Right lobe of liver (tissue), 6 donors: ENCODE measurements at regions of chr1 and their contacts with region 1.

Region 1: DNA sequence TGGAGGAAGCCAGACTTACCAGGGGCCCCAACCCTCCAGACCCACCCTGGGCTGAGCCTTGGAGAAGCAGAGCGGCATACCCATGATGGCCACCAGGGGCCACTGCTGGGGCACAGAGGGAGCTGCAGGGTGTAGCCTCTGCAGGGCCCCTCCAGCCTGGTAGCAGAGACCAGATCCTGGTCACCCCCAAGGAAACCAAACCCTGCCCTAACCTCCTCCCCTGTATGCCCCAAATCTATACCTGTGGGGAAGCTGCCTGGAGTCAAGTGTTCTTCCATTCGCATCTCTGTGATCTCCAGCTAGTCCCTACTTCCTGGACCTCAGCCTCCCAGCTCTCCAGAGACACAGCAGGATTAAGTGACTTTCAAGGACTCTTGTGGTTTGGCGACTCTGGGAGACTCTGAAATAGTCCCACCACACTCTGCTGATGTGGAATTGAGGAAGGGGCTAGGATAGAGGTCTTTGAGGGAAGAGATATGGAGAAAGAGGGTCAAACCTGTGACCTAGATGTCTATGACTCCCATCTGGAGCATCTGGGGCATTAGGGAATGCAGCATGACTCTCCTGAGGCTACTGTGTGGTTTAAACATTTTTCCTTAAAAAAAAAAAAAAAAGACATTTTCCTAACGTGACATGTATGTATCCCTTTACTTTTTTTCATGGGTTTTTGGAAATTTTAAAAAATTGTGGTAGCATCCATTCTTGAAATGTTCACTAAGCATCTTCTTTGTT is 119.2 kb upstream of the IPO9 start:
- DNase-seq: peak in 2 of 3 donors; percentile 67 to 72
- ATAC-seq: peak; percentile 76 to 88 (median 82)
- H3K4me3 ChIP-seq: no peak overlapping the region
- H3K27ac ChIP-seq: no peak overlapping the region
- H3K4me1 ChIP-seq: no peaks in the 10 kb centered on the region
- H3K27me3 ChIP-seq: no peaks in the 10 kb centered on the region
- CTCF ChIP-seq: peak; percentile 70 to 94 (median 90)
- POLR2A ChIP-seq: no peak

Region 2: DNA sequence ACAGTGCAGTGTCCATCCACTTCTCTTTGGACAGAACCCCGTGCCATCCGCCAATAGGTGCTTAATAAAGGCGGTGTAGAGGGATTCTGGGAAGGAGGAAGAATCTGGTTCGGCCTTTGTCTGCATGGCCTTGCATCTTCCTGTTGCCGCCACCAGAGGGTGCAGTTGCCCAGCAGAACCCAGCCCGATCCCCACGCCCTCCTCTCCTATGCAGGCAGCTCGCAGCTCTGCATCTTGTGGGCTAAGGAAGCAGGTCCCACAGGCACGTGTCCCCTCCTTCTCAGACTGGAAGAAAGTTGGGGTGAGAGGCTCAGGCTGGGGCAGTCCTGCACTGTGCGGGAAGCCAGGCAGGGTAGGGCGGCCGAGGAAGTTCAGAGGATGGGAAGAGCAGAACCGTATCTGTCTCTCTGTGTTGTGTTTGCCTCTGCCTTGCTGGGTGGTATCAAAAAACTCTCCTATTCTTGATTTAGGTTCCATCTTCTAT is 150.0 kb before region 1 on chr1:
- intact Hi-C with region 1: loop called (anchors 2 to 5 kb)
- DNase-seq: peak; percentile 76 to 84 (median 80)
- ATAC-seq: peak; percentile 96 to 98 (median 97)
- H3K4me3 ChIP-seq: no peak overlapping the region
- H3K27ac ChIP-seq: no peak overlapping the region
- H3K4me1 ChIP-seq: no peaks in the 10 kb centered on the region
- H3K27me3 ChIP-seq: no peaks in the 10 kb centered on the region
- CTCF ChIP-seq: peak; percentile 93 to 96 (median 94)
- POLR2A ChIP-seq: no peak

Region 3: DNA sequence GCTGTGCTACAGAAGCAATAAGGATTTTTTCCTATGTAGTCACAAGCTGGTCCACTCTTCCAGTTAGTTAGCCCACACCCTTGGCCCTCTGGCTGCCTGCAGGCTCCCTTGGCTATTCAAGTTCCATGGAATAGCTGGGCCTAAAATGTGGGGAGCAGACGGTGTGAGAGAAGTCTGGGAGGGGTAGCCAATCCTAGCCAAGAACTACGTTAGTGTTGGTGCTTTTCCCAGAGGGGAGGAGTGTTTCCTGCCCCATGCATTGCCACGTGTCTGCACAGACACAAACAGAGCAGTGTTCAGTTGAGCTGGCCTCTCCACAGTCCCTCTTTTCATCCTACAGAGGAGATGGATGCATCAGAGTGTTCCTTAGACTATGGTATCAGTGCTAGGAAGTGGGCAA is 60.2 kb after region 1 on chr1:
- intact Hi-C with region 1: no loop called
- DNase-seq: no peak
- ATAC-seq: no peak
- H3K4me3 ChIP-seq: no peak overlapping the region
- H3K27ac ChIP-seq: no peak overlapping the region
- H3K4me1 ChIP-seq: no peaks in the 10 kb centered on the region
- H3K27me3 ChIP-seq: no peaks in the 10 kb centered on the region
- CTCF ChIP-seq: no peak
- POLR2A ChIP-seq: no peak

Region 4: GRCh38 chr1:201783572-201783971 is 73.8 kb after region 1 on chr1:
- intact Hi-C with region 1: loop called in 1 of 2 experiments (anchors 5 kb)
- DNase-seq: no peak
- ATAC-seq: no peak
- H3K4me3 ChIP-seq: no peak overlapping the region
- H3K27ac ChIP-seq: no peak overlapping the region
- H3K4me1 ChIP-seq: no peaks in the 10 kb centered on the region
- H3K27me3 ChIP-seq: no peaks in the 10 kb centered on the region
- CTCF ChIP-seq: no peak
- POLR2A ChIP-seq: no peak

Region 5: GRCh38 chr1:201792534-201793305 is 83.0 kb after region 1 on chr1:
- intact Hi-C with region 1: loop called (anchors 5 kb)
- DNase-seq: peak; percentile 50 to 76 (median 61)
- ATAC-seq: peak; percentile 95 to 97 (median 96)
- H3K4me3 ChIP-seq: no peak overlapping the region
- H3K27ac ChIP-seq: no peak overlapping the region
- H3K4me1 ChIP-seq: no peaks in the 10 kb centered on the region
- H3K27me3 ChIP-seq: no peaks in the 10 kb centered on the region
- CTCF ChIP-seq: peak; percentile 91 to 95 (median 95)
- POLR2A ChIP-seq: no peak